ENCODE measurements at regions of chr17 and their contacts with region 1.

Region 1: GRCh38 chr17:50956750-50957523 is 90.8 kb upstream of the TOB1 start:
- DNase-seq: peak; percentile 73
- ATAC-seq: peak; percentile 91
- H3K4me3 Mint-ChIP-seq: no peak overlapping the region
- H3K27ac Mint-ChIP-seq: peak overlapping the region; percentile 43
- H3K4me1 Mint-ChIP-seq: peaks cover 7% of the 10 kb centered on the region
- H3K27me3 Mint-ChIP-seq: peaks cover 4% of the 10 kb centered on the region

Region 2: DNA sequence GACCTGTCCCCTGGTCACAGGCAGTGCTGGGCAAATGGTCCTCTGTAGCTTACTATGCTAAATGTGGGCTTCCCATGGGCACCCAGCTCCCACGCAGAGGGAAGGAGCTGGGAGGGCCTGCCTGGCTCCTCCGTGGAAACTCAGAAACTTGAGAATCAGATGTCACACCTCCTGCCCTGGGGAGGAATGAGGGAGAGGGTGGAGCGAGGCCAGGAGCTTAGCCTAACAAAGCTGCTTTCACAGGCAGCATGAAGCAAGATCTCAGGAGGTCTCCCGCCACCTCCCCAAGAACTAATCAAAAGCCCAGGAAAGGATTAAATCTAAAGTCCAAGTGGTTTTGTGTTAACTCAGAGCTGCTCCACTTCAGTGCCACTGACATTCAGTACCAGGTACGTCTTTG is 644.6 kb before region 1 on chr17:
- CTCF ChIA-PET with region 1: no interaction called
- DNase-seq: no peak
- ATAC-seq: no peak
- H3K4me3 Mint-ChIP-seq: no peak overlapping the region
- H3K27ac Mint-ChIP-seq: no peak overlapping the region
- H3K4me1 Mint-ChIP-seq: peaks cover 14% of the 10 kb centered on the region
- H3K27me3 Mint-ChIP-seq: peaks cover 11% of the 10 kb centered on the region

Region 3: DNA sequence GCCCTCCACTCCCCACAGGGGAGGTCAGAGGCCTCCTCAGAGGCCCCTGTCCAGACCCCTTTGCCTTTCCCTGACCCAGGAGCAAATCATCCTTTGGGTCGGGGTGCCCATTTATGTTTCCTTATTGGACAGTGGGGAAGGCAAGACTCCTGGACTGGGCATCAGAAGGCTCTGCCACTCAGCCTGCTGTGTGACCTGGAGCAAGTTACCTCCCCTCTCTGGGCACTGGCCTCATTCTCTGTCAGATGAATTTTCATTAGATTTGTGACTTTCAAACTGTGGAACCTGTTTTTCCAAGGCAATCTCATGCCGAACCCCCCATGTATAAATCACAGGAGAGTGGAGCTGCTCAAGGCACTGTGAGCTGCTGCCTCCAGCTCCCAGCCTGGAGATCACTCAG is 43.8 kb before region 1 on chr17:
- CTCF ChIA-PET with region 1: interaction called, 10 read pairs
- DNase-seq: no peak
- ATAC-seq: no peak
- H3K4me3 Mint-ChIP-seq: no peak overlapping the region
- H3K27ac Mint-ChIP-seq: peak overlapping the region; percentile 49
- H3K4me1 Mint-ChIP-seq: peaks cover 50% of the 10 kb centered on the region
- H3K27me3 Mint-ChIP-seq: no peaks in the 10 kb centered on the region

Region 4: DNA sequence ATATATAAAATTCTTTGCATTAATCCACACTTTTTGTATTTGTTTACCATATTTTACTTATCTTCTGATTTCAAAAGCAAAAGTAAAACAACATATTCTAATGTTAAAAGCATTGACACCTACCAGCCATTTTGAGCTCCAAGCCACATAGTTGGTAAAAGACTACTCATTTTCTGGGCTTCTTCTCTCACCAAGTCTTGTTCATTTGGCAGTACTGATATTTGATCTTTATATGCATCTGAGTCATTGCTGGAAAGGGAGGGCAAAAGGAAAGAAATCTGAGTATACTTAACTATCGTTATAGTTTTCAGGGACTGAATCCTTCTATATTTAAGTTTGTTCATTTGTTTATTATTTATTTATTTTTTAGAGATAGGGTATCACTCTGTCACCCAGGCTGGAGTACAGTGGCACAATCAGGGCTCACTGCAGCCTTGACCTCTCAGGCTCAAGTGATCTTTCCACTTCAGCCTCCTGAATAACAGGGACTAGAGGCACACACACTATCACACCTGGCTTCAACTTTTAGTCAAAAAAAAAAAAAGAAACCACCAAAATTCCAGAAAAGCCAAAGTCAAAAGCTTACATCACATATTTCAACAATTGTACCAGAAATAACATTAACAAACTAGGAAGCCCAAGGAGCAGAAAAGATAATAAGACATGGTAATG is 30.2 kb after region 1 on chr17:
- CTCF ChIA-PET with region 1: no interaction called
- DNase-seq: no peak
- ATAC-seq: peak; percentile 36
- H3K4me3 Mint-ChIP-seq: no peak overlapping the region
- H3K27ac Mint-ChIP-seq: peak overlapping the region; percentile 44
- H3K4me1 Mint-ChIP-seq: no peaks in the 10 kb centered on the region
- H3K27me3 Mint-ChIP-seq: no peaks in the 10 kb centered on the region

Measured in activated CD8-positive, alpha-beta memory T cell treated with anti-CD3 and anti-CD28 coated beads, Interleukin-2, amount 10 ng/mL, durations not matched to agents 7 days and 5 days (primary cell).